Uterus (tissue), 4 donors: ENCODE measurements at regions of chr11 and their contacts with region 1.

Region 1: GRCh38 chr11:124669193-124669592 is 4.3 kb downstream of the SIAE start:
- DNase-seq: peak; percentile 18 to 41
- H3K4me3 ChIP-seq: no peak overlapping the region
- H3K27ac ChIP-seq: no peak overlapping the region
- H3K4me1 ChIP-seq: peaks cover 0 to under 1% of the 10 kb centered on the region in 2 donors
- H3K27me3 ChIP-seq: no peaks in the 10 kb centered on the region
- CTCF ChIP-seq: peak; percentile 76 to 87 (median 84)
- POLR2A ChIP-seq: no peak

Region 2: DNA sequence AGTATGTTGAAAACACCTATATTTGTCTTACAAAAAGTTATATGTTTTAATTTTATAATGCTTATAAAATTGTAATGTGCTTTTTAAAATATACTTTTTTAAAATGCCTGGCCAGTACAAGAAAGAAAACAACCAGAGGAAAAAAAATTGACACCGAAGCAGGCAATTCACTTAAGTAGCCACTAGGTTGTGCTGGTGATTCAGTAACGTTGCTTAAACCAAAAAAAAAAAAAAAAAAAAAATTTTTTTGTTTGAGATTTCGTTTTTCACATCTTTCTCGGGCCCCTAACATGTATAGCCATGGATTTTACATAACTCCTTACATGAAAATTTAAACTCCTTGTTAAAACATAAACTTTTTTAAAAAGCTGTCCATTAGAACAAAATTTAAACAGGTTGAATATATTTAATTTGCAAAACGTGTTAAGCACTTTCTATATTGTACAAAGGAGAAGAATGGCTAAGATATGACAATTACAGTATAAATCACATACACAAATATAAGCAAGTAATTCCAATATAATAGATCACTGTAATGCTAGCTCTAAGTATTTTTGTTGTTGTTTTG is 253.8 kb before region 1 on chr11:
- intact Hi-C with region 1: no loop called
- DNase-seq: no peak
- H3K4me3 ChIP-seq: no peak overlapping the region
- H3K27ac ChIP-seq: no peak overlapping the region
- H3K4me1 ChIP-seq: no peaks in the 10 kb centered on the region
- H3K27me3 ChIP-seq: no peaks in the 10 kb centered on the region
- CTCF ChIP-seq: peak in 3 of 4 experiments; percentile 16 to 38 (median 18)
- POLR2A ChIP-seq: no peak

Region 3: DNA sequence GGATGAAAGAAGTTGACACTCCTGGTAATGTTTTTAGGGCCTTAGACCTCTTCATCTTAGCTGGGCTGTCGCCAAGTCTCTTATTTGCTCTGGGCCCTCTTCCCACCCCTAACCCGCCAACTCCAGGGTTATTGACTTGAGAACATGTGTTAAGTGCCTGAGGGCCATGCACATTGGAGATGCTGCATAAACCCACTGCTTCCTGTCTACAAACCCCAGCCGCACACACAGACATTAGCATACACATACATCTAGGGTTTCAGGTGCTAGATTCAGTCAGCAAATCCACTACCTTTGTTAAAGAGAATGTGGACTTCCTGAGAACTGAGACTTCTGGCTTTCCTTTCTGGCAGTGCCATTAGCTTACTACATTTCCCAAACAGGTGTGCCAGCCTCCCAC is 57.1 kb before region 1 on chr11:
- intact Hi-C with region 1: no loop called
- DNase-seq: no peak
- H3K4me3 ChIP-seq: no peak overlapping the region
- H3K27ac ChIP-seq: no peak overlapping the region
- H3K4me1 ChIP-seq: no peaks in the 10 kb centered on the region
- H3K27me3 ChIP-seq: no peaks in the 10 kb centered on the region
- CTCF ChIP-seq: no peak
- POLR2A ChIP-seq: no peak

Region 4: GRCh38 chr11:124763156-124763947 is 94.2 kb after region 1 on chr11:
- intact Hi-C with region 1: loop called (anchors 2 kb)
- DNase-seq: peak; percentile 84 to 85
- H3K4me3 ChIP-seq: peak overlapping the region; percentile 38 to 54
- H3K27ac ChIP-seq: peak overlapping the region; percentile 84 to 87
- H3K4me1 ChIP-seq: peaks cover 0 to 23% of the 10 kb centered on the region in 2 donors
- H3K27me3 ChIP-seq: peaks cover 7 to 22% of the 10 kb centered on the region in 2 donors
- CTCF ChIP-seq: peak; percentile 62 to 77 (median 74)
- POLR2A ChIP-seq: no peak

Region 5: DNA sequence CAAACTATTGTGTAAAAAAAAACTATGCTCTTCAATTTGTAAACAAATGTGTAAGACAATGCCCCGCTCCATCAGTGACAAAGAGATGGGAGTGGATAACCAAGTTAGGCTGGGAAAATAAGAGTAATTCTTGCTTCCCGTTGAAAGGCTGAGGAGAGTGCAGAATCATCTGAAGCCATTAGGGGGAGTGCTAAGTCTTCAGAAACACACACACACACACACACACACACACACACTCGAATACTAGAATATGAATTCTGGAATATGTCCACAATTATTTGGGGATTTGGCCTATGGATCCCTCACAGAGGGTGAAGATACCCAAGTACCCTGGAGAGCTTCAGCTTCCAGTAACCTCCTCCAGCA is 168.3 kb after region 1 on chr11:
- intact Hi-C with region 1: loop called (anchors 5 kb)
- DNase-seq: no peak
- H3K4me3 ChIP-seq: no peak overlapping the region
- H3K27ac ChIP-seq: no peak overlapping the region
- H3K4me1 ChIP-seq: peaks cover 0 to 8% of the 10 kb centered on the region in 2 donors
- H3K27me3 ChIP-seq: peaks cover 21 to 24% of the 10 kb centered on the region in 2 donors
- CTCF ChIP-seq: peak in 1 of 4 experiments; percentile 48
- POLR2A ChIP-seq: no peak